ENCODE measurements at regions of chr4 and their contacts with region 1.

Region 1: GRCh38 chr4:48085821-48086607 is 48.0 kb downstream of the TXK start:
- DNase-seq: no peak
- ATAC-seq: no peak
- H3K4me3 ChIP-seq: no peak overlapping the region
- H3K27ac ChIP-seq: no peak overlapping the region
- H3K4me1 ChIP-seq: no peaks in the 10 kb centered on the region
- H3K27me3 ChIP-seq: no peaks in the 10 kb centered on the region
- CTCF ChIP-seq: no peak

Region 2: DNA sequence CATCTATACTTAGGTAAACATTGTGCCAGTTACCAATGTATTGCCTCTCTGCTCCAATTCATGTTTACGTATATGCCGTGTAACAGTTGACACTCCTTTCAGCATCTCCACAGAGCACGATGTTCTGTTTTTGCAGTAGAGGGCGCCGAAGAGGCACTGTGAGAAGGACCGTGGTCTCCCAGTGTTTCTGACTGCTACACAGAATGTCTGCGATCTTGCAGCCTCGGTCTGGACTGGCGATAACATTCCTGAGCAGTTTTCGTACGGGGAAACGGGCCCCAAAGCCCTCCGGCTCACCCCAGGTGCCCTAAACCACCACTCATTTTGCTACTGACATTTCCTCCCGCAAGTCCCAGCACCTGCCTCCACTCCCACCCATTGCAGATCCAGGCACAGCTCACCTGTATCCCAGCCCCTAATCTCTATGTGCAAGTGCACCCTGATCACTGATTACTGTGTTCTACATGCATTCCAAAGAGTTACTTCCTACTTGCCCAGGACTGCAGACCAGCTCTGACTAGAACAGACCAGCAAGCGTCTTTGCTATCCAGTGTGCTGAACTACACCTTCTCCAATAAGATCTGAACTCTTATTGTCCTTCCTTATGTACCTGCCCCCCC is 159.3 kb before region 1 on chr4:
- intact Hi-C with region 1: loop called (anchors 2 to 5 kb)
- DNase-seq: peak in 1 of 2 donors; percentile 15
- ATAC-seq: peak; percentile 54 to 86 (median 78)
- H3K4me3 ChIP-seq: no peak overlapping the region
- H3K27ac ChIP-seq: no peak overlapping the region
- H3K4me1 ChIP-seq: no peaks in the 10 kb centered on the region
- H3K27me3 ChIP-seq: peaks cover 0 to 6% (median 0%) of the 10 kb centered on the region in 3 donors
- CTCF ChIP-seq: peak; percentile 66

Region 3: DNA sequence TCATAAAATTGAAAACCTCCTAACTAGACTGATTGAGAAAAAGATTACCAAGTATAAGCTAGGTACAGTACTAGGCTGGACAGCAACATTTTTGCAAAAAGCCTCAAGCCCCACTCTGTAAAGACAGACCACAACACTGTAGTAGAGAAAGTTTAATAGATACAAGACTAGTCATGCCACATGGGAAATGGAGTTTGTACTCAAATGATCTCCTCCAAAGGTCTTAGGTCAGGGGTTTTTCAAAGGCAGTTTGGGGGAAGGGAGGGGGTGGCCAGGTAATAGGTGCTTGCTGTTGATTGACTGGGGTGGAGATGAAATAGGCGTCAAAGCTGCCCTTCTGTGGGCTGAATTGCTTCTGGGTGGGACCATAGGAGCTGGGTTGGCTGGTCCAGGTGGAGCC is 83.7 kb before region 1 on chr4:
- intact Hi-C with region 1: loop called (anchors 1 to 2 kb)
- DNase-seq: no peak
- ATAC-seq: no peak
- H3K4me3 ChIP-seq: no peak overlapping the region
- H3K27ac ChIP-seq: no peak overlapping the region
- H3K4me1 ChIP-seq: no peaks in the 10 kb centered on the region
- H3K27me3 ChIP-seq: no peaks in the 10 kb centered on the region
- CTCF ChIP-seq: no peak

Region 4: GRCh38 chr4:48008021-48008596 is 77.9 kb before region 1 on chr4:
- intact Hi-C with region 1: loop called (anchors 1 to 2 kb)
- DNase-seq: no peak
- ATAC-seq: no peak
- H3K4me3 ChIP-seq: no peak overlapping the region
- H3K27ac ChIP-seq: no peak overlapping the region
- H3K4me1 ChIP-seq: no peaks in the 10 kb centered on the region
- H3K27me3 ChIP-seq: no peaks in the 10 kb centered on the region
- CTCF ChIP-seq: no peak

Region 5: DNA sequence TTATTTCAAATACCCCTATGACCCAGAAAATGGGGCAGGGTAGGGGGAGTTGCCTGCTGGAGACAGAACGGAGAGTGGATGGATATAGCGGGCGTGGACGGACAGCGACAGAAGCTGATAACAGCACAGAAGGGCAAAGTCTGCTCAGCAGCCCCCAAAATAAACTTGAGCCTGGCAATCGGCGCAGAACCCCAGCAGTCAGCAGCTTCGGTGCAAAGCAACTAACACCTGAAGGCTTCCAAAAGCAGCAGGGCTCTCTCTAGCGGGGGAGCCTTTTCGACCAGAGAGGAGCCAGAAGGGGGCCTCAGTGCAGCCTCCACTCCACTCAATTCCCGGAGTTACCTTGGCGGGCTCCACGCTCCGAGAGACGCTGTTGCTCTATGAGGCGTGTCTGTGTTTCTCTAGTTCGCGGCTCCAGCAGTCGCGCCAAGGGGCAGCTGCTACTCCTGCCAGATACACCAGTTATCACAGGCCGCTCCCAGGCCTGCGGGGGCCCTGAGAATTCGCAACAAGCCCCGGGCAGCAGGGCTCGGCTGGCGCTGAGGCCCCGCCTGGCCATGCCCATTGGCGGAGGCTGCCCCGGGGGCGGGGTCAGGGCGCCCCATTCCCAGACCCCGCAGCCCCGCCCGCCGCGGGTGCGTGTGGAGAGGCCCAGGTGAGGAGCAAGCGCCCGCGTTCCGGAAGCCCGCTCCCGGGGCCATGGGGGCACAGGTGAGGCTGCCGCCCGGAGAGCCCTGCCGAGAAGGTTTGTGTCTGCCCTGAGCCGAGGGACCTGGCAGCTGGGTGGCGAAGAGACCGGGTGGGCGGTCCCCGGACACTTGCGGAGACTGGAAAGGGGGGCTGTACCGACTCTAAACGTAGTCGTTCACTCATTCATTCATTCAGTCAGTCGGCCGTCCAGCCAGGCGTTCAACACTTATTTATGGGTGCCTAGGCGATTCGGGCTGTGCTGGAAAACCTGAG is 69.6 kb before region 1 on chr4 and contains the starts of genes CNGA1 and NIPAL1:
- intact Hi-C with region 1: loop called in 1 of 2 experiments (anchors 5 kb)
- DNase-seq: peak; percentile 72 to 84
- ATAC-seq: peak; percentile 97 to 98 (median 98)
- H3K4me3 ChIP-seq: peak within 1 kb of the TSS; percentile 87
- H3K27ac ChIP-seq: peak within 1 kb of the TSS; percentile 84
- H3K4me1 ChIP-seq: no peaks in the 10 kb centered on the region
- H3K27me3 ChIP-seq: no peaks in the 10 kb centered on the region
- CTCF ChIP-seq: peak; percentile 38
- total RNA-seq, gene CNGA1: 0.50 to 0.77 (median 0.66) TPM
- total RNA-seq, gene NIPAL1: 0.69 to 2.3 (median 0.81) TPM

Region 6: DNA sequence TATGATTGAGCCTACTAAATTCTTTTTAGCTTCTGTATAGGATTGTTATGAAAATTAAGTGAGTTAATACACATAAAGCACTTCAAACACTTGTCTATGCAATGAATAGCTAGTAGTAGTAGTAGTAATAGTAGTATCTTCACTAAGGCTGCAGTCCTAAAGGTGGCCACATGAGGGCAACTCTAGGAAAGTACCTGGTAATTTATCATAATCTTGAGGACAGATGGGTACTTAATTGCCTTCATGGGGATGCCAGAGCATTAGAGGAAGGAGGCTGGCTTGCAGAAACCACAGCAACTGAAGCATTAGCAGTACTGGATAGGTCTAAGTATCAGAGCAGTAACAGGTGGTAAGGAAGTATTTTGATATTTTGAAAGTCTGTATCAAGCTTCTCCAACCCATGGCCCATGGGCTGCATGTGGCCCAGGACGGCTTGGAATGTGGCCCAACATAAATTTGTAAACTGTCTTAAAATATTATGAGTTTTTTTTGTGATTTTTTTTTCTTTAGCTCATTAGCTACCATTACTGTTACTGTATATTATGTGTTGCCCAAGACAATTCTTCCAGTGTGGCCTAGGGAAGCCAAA is 52.1 kb before region 1 on chr4:
- intact Hi-C with region 1: no loop called
- DNase-seq: no peak
- ATAC-seq: peak in 1 of 4 donors; percentile 38
- H3K4me3 ChIP-seq: no peak overlapping the region
- H3K27ac ChIP-seq: no peak overlapping the region
- H3K4me1 ChIP-seq: peaks cover 14% of the 10 kb centered on the region
- H3K27me3 ChIP-seq: no peaks in the 10 kb centered on the region
- CTCF ChIP-seq: peak; percentile 43

Region 7: GRCh38 chr4:48102303-48102702 is 16.3 kb after region 1 on chr4:
- intact Hi-C with region 1: no loop called
- DNase-seq: no peak
- ATAC-seq: no peak
- H3K4me3 ChIP-seq: no peak overlapping the region
- H3K27ac ChIP-seq: no peak overlapping the region
- H3K4me1 ChIP-seq: no peaks in the 10 kb centered on the region
- H3K27me3 ChIP-seq: no peaks in the 10 kb centered on the region
- CTCF ChIP-seq: no peak

Measured in psoas muscle (tissue), 8 donors.